PC-3 (cell line): ENCODE measurements at regions of chr1 and their contacts with region 1.

Region 1: DNA sequence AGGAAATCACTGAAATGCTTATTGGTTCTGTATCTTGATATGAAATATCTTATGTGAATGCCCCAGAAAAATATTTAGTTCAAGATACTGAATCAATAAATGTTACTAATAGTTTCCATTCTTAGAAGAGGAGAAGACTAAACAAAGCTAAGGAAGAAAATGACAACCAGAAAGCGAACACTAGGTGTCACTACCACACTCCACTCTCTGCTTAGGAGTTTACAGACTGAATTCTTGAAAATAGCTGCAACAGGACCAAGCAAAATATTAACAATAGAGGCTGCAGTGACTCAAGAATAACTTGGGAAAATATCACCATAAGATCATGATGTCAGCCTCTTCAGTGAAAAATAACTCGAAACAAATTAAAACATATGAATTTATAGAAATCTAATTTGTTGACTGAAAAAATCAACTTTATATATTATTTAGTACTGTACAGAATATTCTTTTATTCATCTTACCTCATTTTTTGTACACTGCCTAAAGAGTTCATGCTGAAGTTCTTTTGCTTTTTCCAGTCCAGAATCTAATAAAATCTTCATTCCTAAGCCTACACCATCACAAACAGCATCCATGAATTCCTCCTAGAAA is 61.6 kb downstream of the KIF14 start:
- DNase-seq: peak; percentile 84
- ATAC-seq: peak; percentile 92
- H3K4me3 ChIP-seq: no peak overlapping the region
- H3K27ac ChIP-seq: no peak overlapping the region
- H3K4me1 ChIP-seq: no peaks in the 10 kb centered on the region
- H3K27me3 ChIP-seq: no peaks in the 10 kb centered on the region
- CTCF ChIP-seq: peak; percentile 99

Region 2: DNA sequence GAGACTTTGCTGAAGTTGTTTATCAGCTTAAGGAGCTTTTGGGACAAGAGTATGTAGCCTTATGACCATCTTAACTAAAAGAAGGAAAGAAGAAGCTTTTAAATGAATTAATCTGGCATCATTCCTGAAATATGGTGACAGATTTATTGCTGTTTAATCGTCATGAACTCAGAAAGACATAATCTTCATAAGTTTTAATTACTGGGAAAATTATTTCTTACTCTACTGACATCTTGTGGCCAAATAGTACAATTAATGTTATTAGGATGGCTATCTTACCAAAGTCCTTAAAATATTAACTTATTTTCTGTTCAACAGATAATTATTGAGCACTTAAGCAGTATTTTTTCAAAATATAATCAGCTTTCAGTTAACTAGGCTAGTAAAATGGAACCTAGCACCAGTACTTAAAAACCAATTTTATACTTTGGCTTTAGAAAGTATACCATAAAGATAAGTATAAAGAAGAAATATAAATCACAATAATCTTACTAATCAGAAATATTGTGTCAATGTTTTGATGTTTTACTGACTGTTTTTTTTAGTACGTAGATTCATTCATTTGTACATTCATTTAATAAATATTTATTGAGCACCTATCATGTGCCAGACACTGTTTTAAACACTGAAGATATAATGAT is 279.1 kb after region 1 on chr1:
- CTCF ChIA-PET with region 1: interaction called, 3 read pairs
- POLR2A ChIA-PET with region 1: interaction called, 3 read pairs
- intact Hi-C with region 1: loop called (anchors 1 kb)
- DNase-seq: peak; percentile 82
- ATAC-seq: peak; percentile 55
- H3K4me3 ChIP-seq: no peak overlapping the region
- H3K27ac ChIP-seq: no peak overlapping the region
- H3K4me1 ChIP-seq: no peaks in the 10 kb centered on the region
- H3K27me3 ChIP-seq: no peaks in the 10 kb centered on the region
- CTCF ChIP-seq: peak; percentile 94

Region 3: GRCh38 chr1:201042779-201043461 is 484.0 kb after region 1 on chr1:
- CTCF ChIA-PET with region 1: interaction called, 5 read pairs
- POLR2A ChIA-PET with region 1: no interaction called
- intact Hi-C with region 1: loop called (anchors 1 kb)
- DNase-seq: peak; percentile 92
- ATAC-seq: peak; percentile 94
- H3K4me3 ChIP-seq: no peak overlapping the region
- H3K27ac ChIP-seq: no peak overlapping the region
- H3K4me1 ChIP-seq: no peaks in the 10 kb centered on the region
- H3K27me3 ChIP-seq: peaks cover 15% of the 10 kb centered on the region
- CTCF ChIP-seq: peak; percentile 100